Heart left ventricle (tissue), 16 donors: ENCODE measurements at regions of chr14 and their contacts with region 1.

Region 1: DNA sequence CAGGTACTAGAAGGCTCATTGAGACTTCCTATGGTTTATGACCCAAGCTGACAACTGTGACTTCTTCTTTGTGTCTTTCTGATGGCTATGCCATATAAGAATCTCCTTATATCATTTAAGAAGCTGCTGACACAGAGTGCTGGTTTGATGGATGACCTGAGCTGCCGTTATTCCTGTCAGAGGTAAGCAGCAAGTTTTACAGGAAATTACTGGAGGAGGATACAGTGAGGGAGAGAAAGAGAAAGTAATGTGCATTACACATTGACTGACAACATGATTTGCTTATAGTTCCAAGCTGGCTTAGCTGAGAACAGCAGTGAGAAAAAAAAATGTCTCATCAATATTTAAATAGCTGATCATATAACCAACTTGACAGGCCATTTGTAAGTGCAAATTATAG is 981.4 kb downstream of the FSCB start:
- DNase-seq: no peak
- ATAC-seq: no peak
- H3K4me3 ChIP-seq: no peak overlapping the region
- H3K27ac ChIP-seq: no peak overlapping the region
- H3K4me1 ChIP-seq: no peaks in the 10 kb centered on the region
- H3K27me3 ChIP-seq: no peaks in the 10 kb centered on the region
- CTCF ChIP-seq: no peak
- POLR2A ChIP-seq: no peak

Region 2: DNA sequence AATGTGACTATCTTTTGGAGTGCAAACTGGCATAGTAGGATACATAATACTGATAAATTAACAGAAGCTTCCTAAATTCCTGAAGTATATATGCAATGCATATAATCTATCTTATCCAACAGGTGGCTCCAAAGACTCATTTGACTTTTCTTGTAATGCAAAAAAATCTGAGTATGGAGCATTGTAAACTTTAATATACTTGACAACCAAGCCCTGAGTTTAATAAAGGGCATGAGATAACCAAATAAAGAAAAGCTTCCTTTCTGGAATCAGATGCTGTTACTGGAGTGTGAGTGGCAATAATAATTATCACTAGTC is 22.1 kb before region 1 on chr14:
- intact Hi-C with region 1: loop called in 1 of 10 experiments (anchors 2 kb)
- DNase-seq: no peak
- ATAC-seq: no peak
- H3K4me3 ChIP-seq: no peak overlapping the region
- H3K27ac ChIP-seq: no peak overlapping the region
- H3K4me1 ChIP-seq: no peaks in the 10 kb centered on the region
- H3K27me3 ChIP-seq: no peaks in the 10 kb centered on the region
- CTCF ChIP-seq: no peak
- POLR2A ChIP-seq: no peak

Region 3: GRCh38 chr14:44180975-44181374 is 655.3 kb after region 1 on chr14:
- intact Hi-C with region 1: no loop called
- DNase-seq: no peak
- ATAC-seq: no peak
- H3K4me3 ChIP-seq: no peak overlapping the region
- H3K27ac ChIP-seq: no peak overlapping the region
- H3K4me1 ChIP-seq: no peaks in the 10 kb centered on the region
- H3K27me3 ChIP-seq: no peaks in the 10 kb centered on the region
- CTCF ChIP-seq: no peak
- POLR2A ChIP-seq: no peak